GM10248 (cell line): ENCODE measurements at regions of chr15 and their contacts with region 1.

Region 1: GRCh38 chr15:74781431-74782258 is at the start of gene CSK:
- DNase-seq: peak; percentile 87
- CTCF ChIP-seq: peak; percentile 66

Region 2: GRCh38 chr15:74443100-74443909 is 338.3 kb before region 1 on chr15:
- CTCF ChIA-PET with region 1: no interaction called
- POLR2A ChIA-PET with region 1: no interaction called
- DNase-seq: no peak
- CTCF ChIP-seq: no peak

Region 3: DNA sequence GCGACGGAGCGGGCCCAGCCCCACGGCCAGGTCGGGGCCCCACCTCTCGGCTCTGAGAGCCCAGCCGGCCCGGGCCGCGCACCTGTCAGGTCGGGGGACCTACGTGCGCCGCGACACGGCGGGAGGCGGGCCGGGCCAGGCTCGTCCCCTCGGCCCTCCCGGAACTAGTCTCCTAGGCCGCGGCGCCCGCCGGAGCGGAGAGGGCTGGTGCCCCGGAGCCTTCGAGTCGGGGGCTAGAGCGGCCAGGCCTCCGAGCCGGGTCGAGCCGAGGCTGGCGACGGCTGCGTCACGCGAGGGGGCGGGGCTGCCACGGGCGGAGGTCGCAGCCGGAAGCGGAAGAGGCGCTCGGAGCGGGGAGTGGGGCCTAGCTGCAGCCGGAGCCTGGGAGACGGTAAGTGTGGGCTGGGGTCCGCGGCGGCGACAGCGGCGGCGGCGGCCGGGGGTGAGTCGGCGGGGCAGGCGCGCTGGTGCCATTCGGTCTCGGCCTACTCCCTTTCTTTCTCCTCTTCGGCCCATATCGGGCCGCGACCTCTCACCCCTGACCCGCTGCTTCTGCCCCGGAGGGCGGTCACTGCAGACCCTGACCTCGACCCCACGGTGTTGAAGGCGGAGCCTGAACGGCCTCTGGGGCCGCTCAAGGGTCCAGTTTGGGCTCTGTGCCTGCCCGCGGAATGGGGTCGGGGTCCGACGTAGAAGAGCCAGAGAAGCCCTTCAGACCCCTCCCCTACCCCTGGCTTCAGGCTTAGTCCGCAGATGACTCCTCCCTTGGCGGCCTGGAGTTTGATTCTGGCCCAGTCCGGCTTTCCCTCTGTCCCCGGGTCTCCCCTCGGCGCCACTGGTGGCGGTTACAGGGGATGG is 165.9 kb before region 1 on chr15 and contains the start of gene CLK3:
- CTCF ChIA-PET with region 1: interaction called, 690 read pairs
- POLR2A ChIA-PET with region 1: no interaction called
- DNase-seq: peak; percentile 99
- CTCF ChIP-seq: no peak

Region 4: DNA sequence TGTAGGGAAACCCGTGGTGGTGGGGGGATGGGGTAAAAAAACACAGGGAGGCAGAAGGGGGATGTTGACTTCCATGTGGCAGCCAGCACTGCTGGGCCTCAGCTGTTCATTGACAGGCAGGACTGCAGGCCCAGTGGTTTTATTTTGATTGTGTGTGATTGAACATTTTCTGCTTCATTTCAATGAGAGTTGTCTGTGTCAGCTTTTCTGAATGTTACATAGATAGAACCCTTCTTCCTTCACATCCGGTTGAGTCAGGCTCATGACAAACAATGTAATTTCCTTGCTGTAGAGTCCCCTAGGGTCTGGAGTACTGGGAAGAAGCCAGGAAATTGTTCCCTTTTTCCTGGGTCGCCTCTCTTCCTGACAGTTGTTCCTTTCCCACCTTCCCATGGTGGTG is 183.1 kb after region 1 on chr15:
- CTCF ChIA-PET with region 1: no interaction called
- POLR2A ChIA-PET with region 1: no interaction called
- DNase-seq: no peak
- CTCF ChIP-seq: no peak